HAP-1 (cell line): ENCODE measurements at regions of chr10 and their contacts with region 1.

Region 1: GRCh38 chr10:3197348-3198003 is 24.9 kb upstream of the PITRM1 start:
- DNase-seq: peak; percentile 72 to 86
- H3K4me3 ChIP-seq: no peak overlapping the region
- H3K4me1 ChIP-seq: peaks cover 19% of the 10 kb centered on the region
- H3K27me3 ChIP-seq: peaks cover 3% of the 10 kb centered on the region; the same call in 1 of the 2 replicates

Region 2: DNA sequence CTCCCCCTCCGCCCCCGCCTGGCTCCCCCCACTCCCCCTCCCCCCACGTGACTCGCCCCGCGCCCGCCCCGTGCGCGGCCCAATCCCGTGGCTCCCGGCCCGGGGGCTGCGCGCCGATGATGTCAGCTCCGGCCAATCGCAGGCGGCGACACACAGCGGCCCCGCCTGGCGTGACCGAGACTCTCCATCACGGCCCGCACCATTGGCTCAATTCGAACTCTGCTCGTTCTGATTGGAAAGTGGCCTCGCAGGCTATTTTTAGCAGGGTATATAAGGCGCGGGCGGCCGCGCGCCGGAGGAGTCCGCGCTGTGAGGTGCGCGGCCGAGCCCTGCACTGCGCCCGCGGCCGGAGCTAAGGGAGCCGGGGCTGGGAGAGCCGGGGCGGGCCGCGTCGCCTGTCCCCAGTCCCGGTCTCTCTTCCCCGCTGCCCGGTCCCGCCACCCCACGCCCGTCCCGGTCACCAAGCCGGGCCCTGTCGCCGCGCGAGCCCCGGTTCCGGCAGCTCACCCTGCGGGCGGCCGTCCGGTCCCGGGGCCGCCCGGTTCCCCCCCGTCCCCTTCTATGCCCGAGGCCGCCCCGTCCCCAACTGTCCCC is 587.9 kb after region 1 on chr10:
- in situ Hi-C with region 1: loop called (anchors 25 kb)
- DNase-seq: peak; percentile 88 to 97
- H3K4me3 ChIP-seq: peak overlapping the region; percentile 97
- H3K4me1 ChIP-seq: peaks cover 18% of the 10 kb centered on the region
- H3K27me3 ChIP-seq: no peaks in the 10 kb centered on the region